ENCODE measurements at regions of chr9 and their contacts with region 1.

Region 1: DNA sequence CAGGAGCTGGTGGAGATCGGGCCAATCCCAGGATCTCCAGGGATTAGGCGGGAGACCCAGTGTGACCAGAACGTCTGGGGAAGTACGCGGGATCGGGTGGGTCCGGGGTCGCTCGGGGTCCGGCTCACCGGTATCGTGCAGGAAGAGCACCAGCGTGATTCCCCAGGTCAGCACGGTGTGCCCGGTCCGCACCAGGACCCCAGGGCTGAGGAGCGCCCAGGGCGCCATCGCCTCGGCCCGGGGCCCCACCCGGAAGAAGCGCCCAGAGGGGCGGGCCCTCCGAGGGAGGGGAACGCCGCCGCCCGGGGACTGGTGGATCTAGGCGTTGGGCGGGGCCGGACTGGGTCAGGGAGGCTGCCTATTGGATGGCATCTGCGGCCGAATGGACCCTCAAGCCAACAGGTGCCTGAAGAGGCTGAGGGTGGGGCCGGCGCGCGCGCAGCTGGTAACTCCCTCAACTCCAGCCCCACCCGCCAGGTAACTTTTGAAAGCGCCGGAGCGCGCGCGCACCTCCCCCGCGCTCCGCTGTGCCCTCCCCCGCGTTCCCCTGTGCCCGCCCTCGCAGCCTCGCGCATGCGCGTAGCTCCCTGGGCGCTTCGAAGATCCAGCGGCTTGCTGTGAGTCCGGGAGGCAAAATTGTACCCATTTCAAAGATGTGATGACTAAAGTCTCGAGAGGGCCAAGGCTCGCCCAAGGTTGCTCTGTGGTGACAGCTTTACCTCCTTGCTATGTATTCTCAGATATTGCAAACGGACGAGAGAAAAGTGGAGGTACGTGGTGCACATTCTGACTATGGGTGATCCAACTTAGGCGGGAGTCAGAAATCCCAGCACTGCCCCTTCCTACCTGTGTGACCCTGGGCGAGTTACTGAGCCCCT is at the start of gene ZDHHC12:
- DNase-seq: peak; percentile 99
- ATAC-seq: peak; percentile 97
- H3K4me3 ChIP-seq: peak within 1 kb of the TSS; percentile 62 to 96 (median 92)
- H3K4me3 Mint-ChIP-seq: peak within 1 kb of the TSS; percentile 97
- H3K27ac ChIP-seq: peak within 1 kb of the TSS; percentile 66 to 82
- H3K27ac Mint-ChIP-seq: peak within 1 kb of the TSS; percentile 91
- H3K4me1 ChIP-seq: peaks cover 18 to 23% of the 10 kb centered on the region in 2 donors
- H3K4me1 Mint-ChIP-seq: peaks cover 31% of the 10 kb centered on the region
- H3K27me3 ChIP-seq: no peaks in the 10 kb centered on the region
- H3K27me3 Mint-ChIP-seq: no peaks in the 10 kb centered on the region
- CTCF ChIP-seq: no peak
- total RNA-seq, gene ZDHHC12: 25.3 and 28.5 TPM in 2 replicates

Region 2: DNA sequence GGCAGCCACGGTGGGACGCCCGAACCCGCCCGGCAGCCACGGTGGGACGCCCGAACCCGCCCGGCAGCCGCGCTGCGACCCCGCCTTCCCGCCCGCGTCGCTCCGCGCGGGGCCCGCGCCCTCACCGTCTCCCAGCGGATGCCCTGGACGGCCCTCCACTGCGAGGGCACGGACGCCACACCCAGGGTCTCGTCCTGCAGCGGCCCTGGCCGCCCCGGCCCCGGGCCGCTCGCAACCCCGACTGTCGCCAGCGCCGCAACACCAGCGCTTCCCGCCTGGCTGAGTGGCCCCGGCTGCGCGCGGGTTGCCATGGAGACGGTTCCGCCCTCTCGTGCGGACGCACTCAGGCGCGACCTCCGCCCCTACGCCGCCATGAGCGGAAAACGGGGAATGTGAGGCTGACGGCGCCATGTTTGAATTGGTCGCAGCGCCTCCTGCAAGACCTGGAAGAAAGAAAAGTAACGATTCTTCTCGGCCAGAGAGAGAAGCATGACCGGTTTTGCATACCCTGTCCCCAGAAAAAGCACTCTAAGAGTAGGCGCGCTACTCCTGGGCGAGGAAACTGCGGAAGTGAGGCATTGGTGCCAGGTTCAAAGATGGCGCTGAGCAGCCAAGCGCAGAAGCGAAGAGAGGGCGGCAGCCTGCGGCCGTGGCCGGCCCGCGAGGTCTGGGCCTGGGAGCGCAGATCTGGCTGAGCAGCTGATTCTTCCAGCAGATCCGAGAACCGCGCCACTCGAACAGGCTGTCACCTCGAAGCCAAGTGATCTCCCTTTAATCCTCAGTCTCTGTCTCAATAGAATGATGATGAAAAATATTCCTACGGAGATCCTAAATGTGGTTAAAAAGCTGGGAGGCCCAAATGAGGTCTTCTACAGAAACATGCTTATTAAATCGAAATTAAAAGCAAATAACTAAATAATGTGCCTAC is 67.4 kb before region 1 on chr9 and contains the start of gene DYNC2I2:
- CTCF ChIA-PET with region 1: no interaction called
- POLR2A ChIA-PET with region 1: no interaction called
- intact Hi-C with region 1: loop called (anchors 2 kb)
- DNase-seq: peak; percentile 90
- ATAC-seq: peak; percentile 80
- H3K4me3 ChIP-seq: peak within 1 kb of the TSS; percentile 66 to 97 (median 89)
- H3K4me3 Mint-ChIP-seq: peak within 1 kb of the TSS; percentile 96
- H3K27ac ChIP-seq: peak within 1 kb of the TSS; percentile 92 to 95
- H3K27ac Mint-ChIP-seq: peak within 1 kb of the TSS; percentile 100
- H3K4me1 ChIP-seq: peaks cover 2 to 14% of the 10 kb centered on the region in 2 donors
- H3K4me1 Mint-ChIP-seq: peaks cover 13% of the 10 kb centered on the region
- H3K27me3 ChIP-seq: no peaks in the 10 kb centered on the region
- H3K27me3 Mint-ChIP-seq: no peaks in the 10 kb centered on the region
- CTCF ChIP-seq: no peak
- total RNA-seq, gene DYNC2I2: 76.6 and 83.4 TPM in 2 replicates

Region 3: GRCh38 chr9:128702445-128702948 is 21.6 kb before region 1 on chr9 and contains the start of gene PKN3:
- CTCF ChIA-PET with region 1: interaction called, 9 read pairs
- POLR2A ChIA-PET with region 1: interaction called, 3 read pairs
- intact Hi-C with region 1: loop called (anchors 1 kb)
- DNase-seq: peak; percentile 89
- ATAC-seq: peak; percentile 89
- H3K4me3 ChIP-seq: peak within 1 kb of the TSS; percentile 11 to 83 (median 67)
- H3K4me3 Mint-ChIP-seq: peak within 1 kb of the TSS; percentile 91
- H3K27ac ChIP-seq: no peak within 1 kb of the TSS
- H3K27ac Mint-ChIP-seq: peak within 1 kb of the TSS; percentile 76
- H3K4me1 ChIP-seq: peaks cover 9 to 17% of the 10 kb centered on the region in 2 donors
- H3K4me1 Mint-ChIP-seq: peaks cover 10% of the 10 kb centered on the region
- H3K27me3 ChIP-seq: no peaks in the 10 kb centered on the region
- H3K27me3 Mint-ChIP-seq: no peaks in the 10 kb centered on the region
- CTCF ChIP-seq: peak; percentile 96
- total RNA-seq, gene PKN3: 3.7 and 4.2 TPM in 2 replicates

Region 4: DNA sequence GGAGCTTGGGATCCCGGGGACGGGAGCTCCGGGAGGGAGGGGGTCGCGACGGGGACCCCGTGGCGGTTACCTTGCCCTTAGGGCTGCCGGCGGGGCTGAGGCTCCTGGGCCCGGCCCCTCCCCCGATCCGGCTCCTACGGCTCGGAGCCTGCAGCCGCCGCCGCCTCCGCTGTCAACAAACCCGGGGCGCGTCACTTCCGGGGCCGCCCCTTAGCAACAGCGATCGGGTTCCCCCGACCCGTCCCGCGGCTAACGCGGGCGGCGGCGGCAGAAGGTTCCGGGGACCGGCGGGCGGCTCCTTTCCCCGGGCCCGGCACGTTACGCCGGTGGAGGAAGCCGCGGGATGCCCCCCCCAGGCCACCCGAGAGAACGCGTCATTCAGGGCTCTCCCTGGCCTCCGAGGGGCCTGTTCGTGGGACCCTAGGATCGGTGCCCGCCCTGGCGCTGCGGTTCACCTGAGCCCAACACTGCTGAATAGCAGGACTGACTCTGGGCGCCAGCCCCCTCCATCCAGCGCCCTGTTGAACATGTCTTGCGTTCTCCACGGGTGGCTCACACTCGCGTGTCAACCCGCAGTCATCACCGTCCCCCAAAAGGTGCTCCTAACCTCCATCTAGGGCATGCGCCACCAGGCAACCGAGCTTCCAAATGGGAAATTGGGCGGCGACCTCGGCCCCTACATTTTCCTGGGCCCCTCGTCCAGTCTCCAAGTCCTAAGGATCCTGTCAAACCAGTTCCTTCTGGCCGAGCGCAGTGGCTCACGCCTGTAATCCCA is 47.8 kb after region 1 on chr9 and contains the start of gene ZER1:
- CTCF ChIA-PET with region 1: no interaction called
- POLR2A ChIA-PET with region 1: interaction called, 3 read pairs
- intact Hi-C with region 1: loop called (anchors 1 kb)
- DNase-seq: peak; percentile 95
- ATAC-seq: peak; percentile 93
- H3K4me3 ChIP-seq: peak within 1 kb of the TSS; percentile 69 to 96 (median 77)
- H3K4me3 Mint-ChIP-seq: peak within 1 kb of the TSS; percentile 97
- H3K27ac ChIP-seq: peak within 1 kb of the TSS; percentile 86 to 93
- H3K27ac Mint-ChIP-seq: peak within 1 kb of the TSS; percentile 96
- H3K4me1 ChIP-seq: peaks cover 9 to 19% of the 10 kb centered on the region in 2 donors
- H3K4me1 Mint-ChIP-seq: peaks cover 25% of the 10 kb centered on the region
- H3K27me3 ChIP-seq: no peaks in the 10 kb centered on the region
- H3K27me3 Mint-ChIP-seq: no peaks in the 10 kb centered on the region
- CTCF ChIP-seq: no peak
- total RNA-seq, gene ZER1: 42.2 and 44.0 TPM in 2 replicates

Region 5: DNA sequence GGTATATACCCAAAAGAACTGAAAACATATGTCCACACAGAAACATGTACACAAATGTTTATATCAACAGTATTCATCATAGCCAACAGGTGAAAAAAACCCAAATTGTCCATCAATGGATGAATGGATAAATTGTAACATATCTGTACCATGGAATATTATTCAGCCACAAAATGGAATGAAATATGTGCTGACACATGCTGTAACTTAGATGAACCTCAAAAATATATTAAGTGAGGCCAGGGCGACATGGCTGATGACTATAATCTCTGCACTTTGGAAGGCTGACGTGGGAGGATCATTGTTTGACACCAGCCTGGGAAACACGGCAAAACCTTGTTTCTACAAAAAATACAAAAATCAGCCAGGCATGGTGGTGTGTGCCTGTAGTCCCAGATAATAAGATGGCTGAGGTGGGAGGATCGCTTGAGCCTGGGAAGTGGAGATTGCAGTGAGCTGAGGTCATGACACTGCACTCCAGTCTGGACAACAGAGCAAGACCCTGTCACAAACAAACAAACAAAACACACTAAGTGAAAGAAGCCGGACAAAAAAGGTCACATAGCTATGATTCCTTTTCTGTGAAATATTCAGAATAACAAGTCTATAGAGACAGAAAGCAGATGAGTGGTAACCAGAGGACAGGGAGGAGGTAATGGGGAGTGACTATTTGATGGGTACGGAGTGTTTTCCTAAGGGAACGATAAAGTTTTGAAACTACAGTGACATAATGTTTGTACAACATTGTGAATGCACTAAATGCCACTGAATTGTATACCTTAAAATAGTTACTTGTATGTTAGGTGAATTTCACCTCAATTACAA is 146.2 kb after region 1 on chr9:
- CTCF ChIA-PET with region 1: no interaction called
- POLR2A ChIA-PET with region 1: no interaction called
- intact Hi-C with region 1: no loop called
- DNase-seq: no peak
- ATAC-seq: no peak
- H3K4me3 ChIP-seq: no peak overlapping the region
- H3K4me3 Mint-ChIP-seq: no peak overlapping the region
- H3K27ac ChIP-seq: no peak overlapping the region
- H3K27ac Mint-ChIP-seq: no peak overlapping the region
- H3K4me1 ChIP-seq: no peaks in the 10 kb centered on the region
- H3K4me1 Mint-ChIP-seq: no peaks in the 10 kb centered on the region
- H3K27me3 ChIP-seq: no peaks in the 10 kb centered on the region
- H3K27me3 Mint-ChIP-seq: no peaks in the 10 kb centered on the region
- CTCF ChIP-seq: no peak

Region 6: GRCh38 chr9:129802851-129803675 is 1079.0 kb after region 1 on chr9 and contains the start of gene TOR1B:
- CTCF ChIA-PET with region 1: no interaction called
- POLR2A ChIA-PET with region 1: no interaction called
- intact Hi-C with region 1: loop called (anchors 5 kb)
- DNase-seq: peak; percentile 98
- ATAC-seq: peak; percentile 94
- H3K4me3 ChIP-seq: peak within 1 kb of the TSS; percentile 41 to 96 (median 76)
- H3K4me3 Mint-ChIP-seq: peak within 1 kb of the TSS; percentile 96
- H3K27ac ChIP-seq: peak within 1 kb of the TSS; percentile 71 to 79
- H3K27ac Mint-ChIP-seq: peak within 1 kb of the TSS; percentile 95
- H3K4me1 ChIP-seq: peaks cover 6 to 13% of the 10 kb centered on the region in 2 donors
- H3K4me1 Mint-ChIP-seq: peaks cover 20% of the 10 kb centered on the region
- H3K27me3 ChIP-seq: no peaks in the 10 kb centered on the region
- H3K27me3 Mint-ChIP-seq: no peaks in the 10 kb centered on the region
- CTCF ChIP-seq: no peak
- total RNA-seq, gene TOR1B: 17.4 and 18.9 TPM in 2 replicates

Measured in B cell (primary cell).